Stomach (tissue), 19 donors: ENCODE measurements at regions of chr3 and their contacts with region 1.

Region 1: DNA sequence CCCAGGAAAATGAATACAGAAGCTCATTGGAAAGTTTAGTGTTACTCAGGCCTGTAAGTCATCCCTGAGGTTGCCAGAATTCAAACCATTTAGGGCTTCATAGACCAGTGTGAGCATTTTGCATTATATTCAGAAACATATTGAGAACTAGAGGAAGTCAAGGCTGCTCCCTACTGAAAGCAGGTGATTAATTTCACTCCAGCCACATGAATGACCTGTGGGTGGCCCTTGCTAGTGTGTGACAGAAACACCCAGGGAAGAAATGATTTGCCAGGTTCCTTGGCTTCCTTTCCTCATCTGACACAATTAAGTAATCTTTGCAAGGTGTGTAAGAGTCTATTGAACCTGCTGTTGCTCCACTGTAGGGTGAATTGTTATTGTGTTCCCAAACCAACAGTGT is 61.8 kb downstream of the GAP43 start:
- DNase-seq: no peak
- H3K4me3 ChIP-seq: no peak overlapping the region
- H3K27ac ChIP-seq: no peak overlapping the region
- H3K4me1 ChIP-seq: no peaks in the 10 kb centered on the region
- H3K27me3 ChIP-seq: no peaks in the 10 kb centered on the region
- CTCF ChIP-seq: no peak
- EP300 ChIP-seq: no peak
- POLR2A ChIP-seq: no peak

Region 2: DNA sequence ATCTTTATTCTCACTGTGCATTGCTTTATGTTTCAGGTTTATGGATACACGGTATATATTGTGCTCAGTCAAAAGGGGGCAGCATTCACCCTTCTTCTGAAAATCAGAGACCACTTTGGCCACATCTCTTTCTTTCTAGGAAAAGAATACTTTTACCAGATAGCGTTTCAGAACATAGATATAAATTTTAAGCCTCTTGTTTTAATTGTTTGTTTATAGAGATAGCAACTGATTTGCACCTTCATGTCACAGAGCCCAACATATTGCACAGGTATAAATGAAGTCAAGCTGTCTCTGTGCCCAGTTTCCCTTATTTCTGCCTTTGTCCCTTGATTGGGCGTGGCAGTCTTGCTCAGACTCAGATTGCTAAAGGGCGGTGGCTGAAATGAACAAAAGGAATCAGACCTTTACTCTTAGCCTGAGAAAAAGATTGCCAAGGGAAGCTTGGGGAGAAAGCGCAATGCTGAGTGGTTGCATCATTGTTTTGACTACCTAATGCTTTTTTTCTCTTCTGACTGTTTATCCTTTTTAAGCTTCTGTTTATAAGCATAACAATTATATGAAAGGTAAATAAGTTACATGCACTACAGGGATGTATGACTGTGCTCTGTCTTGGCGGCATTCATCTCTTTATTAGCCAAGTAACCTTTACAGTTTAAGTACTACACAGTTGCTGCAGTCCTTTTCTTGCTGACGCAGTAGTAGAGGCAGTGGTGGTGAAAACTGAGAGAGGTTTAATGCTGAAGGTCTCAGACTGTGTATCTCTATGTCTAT is 467.2 kb before region 1 on chr3:
- intact Hi-C with region 1: loop called (anchors 5 kb)
- DNase-seq: peak in 1 of 2 donors; percentile 84
- H3K4me3 ChIP-seq: no peak overlapping the region
- H3K27ac ChIP-seq: no peak overlapping the region
- H3K4me1 ChIP-seq: peaks cover 0 to 14% (median 5%) of the 10 kb centered on the region in 4 donors
- H3K27me3 ChIP-seq: peaks cover 0 to 6% (median 0%) of the 10 kb centered on the region in 3 donors
- CTCF ChIP-seq: peak in 4 of 7 experiments; percentile 3 to 49 (median 32)
- EP300 ChIP-seq: no peak
- POLR2A ChIP-seq: no peak